Activated naive CD4-positive, alpha-beta T cell treated with anti-CD3 and anti-CD28 coated beads for 36 hours (primary cell): ENCODE measurements at regions of chrX and their contacts with region 1.

Region 1: GRCh38 chrX:99301990-99302389 is 1108.1 kb downstream of the PCDH19 start:
- DNase-seq: no peak
- H3K4me3 Mint-ChIP-seq: no peak overlapping the region
- H3K27ac Mint-ChIP-seq: no peak overlapping the region
- H3K4me1 Mint-ChIP-seq: no peaks in the 10 kb centered on the region
- H3K27me3 Mint-ChIP-seq: no peaks in the 10 kb centered on the region

Region 2: GRCh38 chrX:100379388-100379986 is 1077.5 kb after region 1 on chrX:
- CTCF ChIA-PET with region 1: no interaction called
- intact Hi-C with region 1: loop called (anchors 2 kb)
- DNase-seq: no peak
- H3K4me3 Mint-ChIP-seq: no peak overlapping the region
- H3K27ac Mint-ChIP-seq: no peak overlapping the region
- H3K4me1 Mint-ChIP-seq: peaks cover 3% of the 10 kb centered on the region
- H3K27me3 Mint-ChIP-seq: no peaks in the 10 kb centered on the region

Region 3: GRCh38 chrX:100413229-100413628 is 1111.2 kb after region 1 on chrX:
- CTCF ChIA-PET with region 1: no interaction called
- intact Hi-C with region 1: loop called (anchors 2 kb)
- DNase-seq: peak; percentile 46
- H3K4me3 Mint-ChIP-seq: no peak overlapping the region
- H3K27ac Mint-ChIP-seq: no peak overlapping the region
- H3K4me1 Mint-ChIP-seq: peaks cover 13% of the 10 kb centered on the region
- H3K27me3 Mint-ChIP-seq: peaks cover 33% of the 10 kb centered on the region